T-cell (primary cell): ENCODE measurements at regions of chr15 and their contacts with region 1.

Region 1: GRCh38 chr15:90095521-90095972 is 6.7 kb downstream of the IDH2 start:
- DNase-seq: peak in 1 of 35 experiments; percentile 58
- ATAC-seq: no peak
- H3K4me3 ChIP-seq: no peak overlapping the region
- H3K4me3 Mint-ChIP-seq: peak overlapping the region in 2 of 3 donors; percentile 41 to 87
- H3K27ac ChIP-seq: peak overlapping the region; percentile 91
- H3K27ac Mint-ChIP-seq: peak overlapping the region; percentile 100
- H3K4me1 ChIP-seq: peaks cover 34 to 76% of the 10 kb centered on the region in 2 experiments
- H3K4me1 Mint-ChIP-seq: peaks cover 71 to 80% (median 73%) of the 10 kb centered on the region in 3 donors
- H3K27me3 ChIP-seq: no peaks in the 10 kb centered on the region
- H3K27me3 Mint-ChIP-seq: no peaks in the 10 kb centered on the region

Region 2: GRCh38 chr15:90076716-90077115 is 18.8 kb before region 1 on chr15:
- CTCF ChIA-PET with region 1: no interaction called
- POLR2A ChIA-PET with region 1: interaction called in 1 of 2 experiments, 10 read pairs
- DNase-seq: no peak
- ATAC-seq: no peak
- H3K4me3 ChIP-seq: no peak overlapping the region
- H3K4me3 Mint-ChIP-seq: no peak overlapping the region
- H3K27ac ChIP-seq: no peak overlapping the region
- H3K27ac Mint-ChIP-seq: no peak overlapping the region
- H3K4me1 ChIP-seq: no peaks in the 10 kb centered on the region
- H3K4me1 Mint-ChIP-seq: no peaks in the 10 kb centered on the region
- H3K27me3 ChIP-seq: no peaks in the 10 kb centered on the region
- H3K27me3 Mint-ChIP-seq: no peaks in the 10 kb centered on the region